ENCODE measurements at regions of chr7 and their contacts with region 1.

Region 1: GRCh38 chr7:2894118-2894940 is 50.2 kb upstream of the GNA12 start:
- DNase-seq: peak; percentile 91
- H3K4me3 ChIP-seq: peak overlapping the region; percentile 63
- H3K27ac ChIP-seq: peak overlapping the region; percentile 98
- H3K4me1 ChIP-seq: peaks cover 63% of the 10 kb centered on the region
- CTCF ChIP-seq: no peak

Region 2: DNA sequence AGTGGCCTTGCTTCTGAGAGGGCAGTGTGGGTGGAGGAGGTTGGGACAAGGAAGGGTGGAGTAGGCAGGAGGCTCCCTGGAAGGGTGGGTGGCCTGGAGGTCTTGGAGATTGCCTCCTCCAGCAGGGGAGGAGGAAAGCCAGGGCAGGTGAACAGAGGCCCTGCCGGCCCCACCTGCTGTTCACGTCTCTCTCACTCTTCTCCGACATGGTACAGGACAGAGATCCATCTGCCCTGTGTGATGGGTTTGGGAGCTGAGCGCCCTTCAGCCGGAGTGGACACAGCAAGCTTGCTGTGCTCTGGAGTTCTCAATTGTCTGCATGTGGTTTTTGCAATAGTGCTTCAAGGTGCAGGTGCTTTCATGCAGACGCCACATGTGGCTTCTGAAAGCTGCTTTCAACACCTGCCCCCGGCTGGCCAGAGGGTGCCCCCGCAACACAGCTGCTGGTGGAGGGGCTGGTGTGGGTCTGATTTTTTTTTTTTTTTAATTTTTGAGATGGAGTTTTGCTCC is 32.6 kb after region 1 on chr7:
- CTCF ChIA-PET with region 1: no interaction called
- POLR2A ChIA-PET with region 1: no interaction called
- intact Hi-C with region 1: loop called (anchors 1 kb)
- DNase-seq: peak; percentile 54
- H3K4me3 ChIP-seq: no peak overlapping the region
- H3K27ac ChIP-seq: no peak overlapping the region
- H3K4me1 ChIP-seq: no peaks in the 10 kb centered on the region
- CTCF ChIP-seq: no peak

Region 3: DNA sequence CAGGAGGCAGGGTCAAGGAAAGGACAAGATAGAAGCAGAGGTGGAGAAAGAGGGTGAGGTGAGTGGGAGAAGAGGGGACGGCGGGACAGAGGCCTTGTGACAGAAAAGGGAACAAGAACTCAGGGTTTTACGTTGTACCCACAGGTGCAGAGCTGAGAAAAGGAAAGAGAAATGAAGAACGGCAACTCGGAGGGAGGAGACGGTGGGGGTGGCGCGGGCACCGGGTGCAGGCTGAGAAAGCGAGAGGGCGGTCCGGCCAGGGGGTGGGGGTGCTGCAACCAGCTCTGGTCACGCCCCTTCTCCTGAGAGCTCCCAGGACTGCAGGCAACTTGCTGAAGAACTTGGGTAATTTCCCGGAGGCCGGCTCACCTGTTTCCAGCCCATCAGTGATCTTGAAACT is 84.1 kb after region 1 on chr7:
- CTCF ChIA-PET with region 1: interaction called, 3 read pairs
- POLR2A ChIA-PET with region 1: interaction called, 23 read pairs
- intact Hi-C with region 1: loop called (anchors 1 kb)
- DNase-seq: peak; percentile 94
- H3K4me3 ChIP-seq: peak overlapping the region; percentile 73
- H3K27ac ChIP-seq: peak overlapping the region; percentile 90
- H3K4me1 ChIP-seq: peaks cover 66% of the 10 kb centered on the region
- CTCF ChIP-seq: no peak

Region 4: GRCh38 chr7:3042861-3043489 is 148.6 kb after region 1 on chr7:
- CTCF ChIA-PET with region 1: interaction called, 3 read pairs
- POLR2A ChIA-PET with region 1: interaction called, 6 read pairs
- intact Hi-C with region 1: loop called (anchors 2 kb)
- DNase-seq: peak; percentile 86
- H3K4me3 ChIP-seq: peak overlapping the region; percentile 82
- H3K27ac ChIP-seq: peak overlapping the region; percentile 52
- H3K4me1 ChIP-seq: peaks cover 33% of the 10 kb centered on the region
- CTCF ChIP-seq: no peak

Region 5: DNA sequence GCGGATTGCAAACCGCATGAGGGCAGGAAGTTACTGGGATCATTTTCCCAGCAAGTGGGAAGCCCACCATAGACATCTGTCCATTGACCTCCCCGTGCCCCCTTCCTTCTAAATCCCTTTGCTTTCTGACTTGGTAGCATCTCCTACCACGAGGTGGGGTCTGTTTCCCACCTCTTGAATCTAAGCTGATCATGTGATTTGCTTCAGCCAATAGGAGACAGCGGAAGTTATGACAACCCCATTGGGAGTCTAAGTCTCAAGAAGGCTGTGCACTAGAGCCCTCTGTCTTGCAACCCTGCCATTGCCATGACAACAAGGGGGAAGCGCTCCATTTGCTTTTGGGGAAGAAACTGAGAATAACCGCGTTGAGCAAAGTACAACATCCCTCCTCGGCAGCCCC is 188.5 kb after region 1 on chr7:
- CTCF ChIA-PET with region 1: no interaction called
- POLR2A ChIA-PET with region 1: no interaction called
- intact Hi-C with region 1: loop called (anchors 5 kb)
- DNase-seq: peak; percentile 49
- H3K4me3 ChIP-seq: no peak overlapping the region
- H3K27ac ChIP-seq: no peak overlapping the region
- H3K4me1 ChIP-seq: peaks cover 11% of the 10 kb centered on the region
- CTCF ChIP-seq: peak; percentile 50